Head of caudate nucleus (tissue), 42 donors: ENCODE measurements at regions of chr3 and their contacts with region 1.

Region 1: DNA sequence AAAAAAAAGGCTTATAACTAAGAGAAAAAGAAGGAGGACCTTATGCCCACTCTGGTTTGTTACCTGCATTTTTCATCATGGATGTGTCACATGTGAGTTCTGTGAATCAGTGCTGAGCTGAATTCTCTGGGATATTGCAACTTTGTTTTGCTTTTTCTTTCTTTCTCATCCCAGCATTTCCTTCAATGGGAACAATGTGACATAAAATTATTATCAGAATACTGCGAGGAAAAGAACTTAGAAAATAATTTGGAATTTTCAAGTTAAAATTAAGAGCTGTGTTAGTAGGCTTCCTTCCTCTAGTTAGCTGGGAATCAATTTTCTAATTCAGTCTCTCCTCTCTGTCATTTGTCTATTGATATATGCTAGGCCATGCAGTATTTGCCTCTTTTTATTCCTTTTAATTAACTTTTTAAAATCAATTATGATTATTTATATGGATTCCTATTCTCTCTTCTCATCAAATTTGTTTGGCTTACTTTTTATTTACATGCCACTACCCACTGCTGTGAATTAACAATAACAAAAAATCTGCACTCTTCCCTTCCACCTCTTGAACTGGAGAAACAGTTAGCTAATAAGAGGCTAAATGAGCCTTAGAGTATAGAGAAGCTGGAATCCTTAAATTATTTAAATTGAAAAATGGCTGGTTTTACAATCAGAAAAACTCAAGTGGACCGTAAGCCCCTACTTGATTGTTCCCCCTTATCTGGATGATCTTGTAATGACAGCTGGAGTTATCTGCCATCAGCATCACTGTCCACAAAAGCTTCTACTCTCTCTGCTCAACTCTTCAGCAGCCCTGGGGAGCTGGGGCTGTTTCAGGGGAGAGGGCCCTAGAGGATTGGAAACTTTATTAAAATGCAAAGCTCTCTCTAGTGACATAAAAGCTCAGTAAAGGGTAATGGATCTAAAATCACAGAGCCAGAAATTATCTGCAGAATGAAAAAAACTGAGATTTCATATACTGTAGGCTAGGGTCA is 95.3 kb upstream of the SOX2 start:
- DNase-seq: no peak

Region 2: DNA sequence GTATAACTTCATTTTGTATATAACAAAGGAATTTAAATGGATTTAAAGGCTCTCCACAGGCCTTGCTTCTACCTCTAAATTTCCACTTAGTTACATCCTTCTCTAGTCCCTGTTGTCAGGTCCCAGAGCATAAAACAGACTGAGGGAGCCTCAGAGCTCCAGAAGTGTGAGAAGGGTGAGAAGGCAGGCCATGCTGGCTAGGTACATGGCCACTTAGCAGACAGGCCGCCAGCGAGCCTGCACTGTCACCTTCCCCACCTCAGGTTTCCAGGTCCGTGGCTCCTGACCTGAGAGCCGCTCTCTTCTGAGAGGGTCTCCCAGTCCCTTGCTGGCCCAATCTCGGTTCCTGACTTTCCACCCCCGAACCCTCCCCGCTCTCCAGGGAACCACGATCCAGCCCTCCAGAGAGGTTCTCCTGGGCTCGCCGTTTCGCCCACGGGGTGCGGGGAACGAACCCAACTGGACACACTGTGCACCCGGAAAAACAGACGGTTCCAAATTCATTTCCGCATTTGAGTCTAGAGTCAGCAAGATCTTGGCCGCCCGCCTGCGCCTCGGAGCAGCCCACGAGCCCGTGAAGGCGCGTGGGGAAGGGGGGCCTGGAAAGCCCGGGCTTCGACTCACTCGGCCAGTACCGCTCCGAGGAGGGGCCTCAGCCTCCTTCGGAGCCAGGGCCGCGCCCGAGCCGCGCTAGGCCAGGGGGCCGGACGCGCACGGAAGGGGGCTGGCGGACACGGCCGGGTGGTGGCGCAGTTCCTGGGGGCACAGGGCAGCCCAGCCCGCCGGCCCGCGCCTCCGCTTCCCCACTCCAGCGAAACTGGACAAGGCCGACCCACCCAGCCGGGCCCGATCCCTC is 78.7 kb after region 1 on chr3:
- intact Hi-C with region 1: loop called (anchors 5 kb)
- DNase-seq: peak; percentile 57 to 92 (median 83)